ENCODE measurements at regions of chr9 and their contacts with region 1.

Region 1: DNA sequence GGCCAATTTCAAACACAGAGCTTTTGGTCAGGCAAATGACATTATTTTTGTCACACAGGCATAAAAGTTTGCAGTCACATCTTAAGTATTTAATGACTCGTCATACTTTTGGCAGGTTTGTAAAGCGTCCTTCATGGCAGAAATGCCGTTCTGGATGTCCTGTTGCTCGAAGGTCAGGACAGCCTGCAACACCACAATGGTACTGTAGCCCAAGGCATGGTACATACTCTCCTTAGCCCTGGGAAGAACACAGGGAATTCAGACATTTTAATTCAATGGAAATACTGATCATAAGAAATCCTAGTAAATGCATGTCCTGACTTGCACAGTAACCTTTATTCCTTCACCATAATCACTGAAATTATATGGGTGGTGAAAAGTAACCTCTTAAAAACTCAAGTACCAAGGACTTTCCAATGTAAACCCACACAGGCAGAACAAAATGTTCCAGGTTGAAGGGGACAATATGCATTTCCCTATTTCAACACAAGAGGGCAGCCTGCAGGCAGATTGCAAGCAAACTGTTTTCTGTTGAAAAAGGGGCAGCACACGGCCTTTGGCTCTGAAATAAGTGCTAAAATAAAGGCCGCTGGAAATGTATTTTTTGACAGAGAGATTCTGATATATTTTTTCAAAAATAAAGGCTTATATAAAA is 95.7 kb downstream of the TTC39B start:
- DNase-seq: peak; percentile 59
- H3K4me3 ChIP-seq: no peak overlapping the region
- H3K27ac ChIP-seq: peak overlapping the region in 2 of 4 donors; percentile 11 to 37
- H3K4me1 ChIP-seq: peaks cover 0 to 25% (median 6%) of the 10 kb centered on the region in 4 donors
- H3K27me3 ChIP-seq: no peaks in the 10 kb centered on the region
- CTCF ChIP-seq: peak; percentile 82 to 90 (median 88)
- EP300 ChIP-seq: peak; percentile 70
- POLR2A ChIP-seq: no peak

Region 2: GRCh38 chr9:15416880-15417279 is 205.6 kb after region 1 on chr9:
- in situ Hi-C with region 1: loop called (anchors 5 to 25 kb)
- intact Hi-C with region 1: loop called (anchors 10 kb)
- DNase-seq: peak; percentile 66
- H3K4me3 ChIP-seq: no peak overlapping the region
- H3K27ac ChIP-seq: no peak overlapping the region
- H3K4me1 ChIP-seq: peaks cover 0 to 6% (median 4%) of the 10 kb centered on the region in 4 donors
- H3K27me3 ChIP-seq: no peaks in the 10 kb centered on the region
- CTCF ChIP-seq: peak; percentile 32 to 62 (median 40)
- EP300 ChIP-seq: no peak
- POLR2A ChIP-seq: no peak

Region 3: GRCh38 chr9:15422372-15423230 is 211.3 kb after region 1 on chr9 and contains the start of gene SNAPC3:
- in situ Hi-C with region 1: loop called (anchors 5 to 25 kb)
- intact Hi-C with region 1: loop called (anchors 10 kb)
- DNase-seq: peak; percentile 97
- H3K4me3 ChIP-seq: peak within 1 kb of the TSS; percentile 72 to 94 (median 88)
- H3K27ac ChIP-seq: peak within 1 kb of the TSS; percentile 88 to 94 (median 91)
- H3K4me1 ChIP-seq: peaks cover 18 to 50% (median 38%) of the 10 kb centered on the region in 4 donors
- H3K27me3 ChIP-seq: no peaks in the 10 kb centered on the region
- CTCF ChIP-seq: peak in 2 of 5 experiments; percentile 49 to 50
- EP300 ChIP-seq: peak; percentile 87
- POLR2A ChIP-seq: peak; percentile 89
- total RNA-seq, gene SNAPC3: 44.9 to 70.7 (median 52.5) TPM

Region 4: GRCh38 chr9:15529566-15530324 is 318.5 kb after region 1 on chr9:
- in situ Hi-C with region 1: no loop called
- intact Hi-C with region 1: no loop called
- DNase-seq: no peak
- H3K4me3 ChIP-seq: no peak overlapping the region
- H3K27ac ChIP-seq: no peak overlapping the region
- H3K4me1 ChIP-seq: no peaks in the 10 kb centered on the region
- H3K27me3 ChIP-seq: no peaks in the 10 kb centered on the region
- CTCF ChIP-seq: no peak
- EP300 ChIP-seq: no peak
- POLR2A ChIP-seq: no peak

Region 5: GRCh38 chr9:15606643-15607472 is 395.6 kb after region 1 on chr9:
- in situ Hi-C with region 1: loop called in 3 of 4 experiments (anchors 25 kb)
- intact Hi-C with region 1: loop called (anchors 5 kb)
- DNase-seq: no peak
- H3K4me3 ChIP-seq: no peak overlapping the region
- H3K27ac ChIP-seq: no peak overlapping the region
- H3K4me1 ChIP-seq: no peaks in the 10 kb centered on the region
- H3K27me3 ChIP-seq: no peaks in the 10 kb centered on the region
- CTCF ChIP-seq: peak; percentile 70 to 82 (median 77)
- EP300 ChIP-seq: no peak
- POLR2A ChIP-seq: no peak